ENCODE measurements at regions of chr15 and their contacts with region 1.

Region 1: DNA sequence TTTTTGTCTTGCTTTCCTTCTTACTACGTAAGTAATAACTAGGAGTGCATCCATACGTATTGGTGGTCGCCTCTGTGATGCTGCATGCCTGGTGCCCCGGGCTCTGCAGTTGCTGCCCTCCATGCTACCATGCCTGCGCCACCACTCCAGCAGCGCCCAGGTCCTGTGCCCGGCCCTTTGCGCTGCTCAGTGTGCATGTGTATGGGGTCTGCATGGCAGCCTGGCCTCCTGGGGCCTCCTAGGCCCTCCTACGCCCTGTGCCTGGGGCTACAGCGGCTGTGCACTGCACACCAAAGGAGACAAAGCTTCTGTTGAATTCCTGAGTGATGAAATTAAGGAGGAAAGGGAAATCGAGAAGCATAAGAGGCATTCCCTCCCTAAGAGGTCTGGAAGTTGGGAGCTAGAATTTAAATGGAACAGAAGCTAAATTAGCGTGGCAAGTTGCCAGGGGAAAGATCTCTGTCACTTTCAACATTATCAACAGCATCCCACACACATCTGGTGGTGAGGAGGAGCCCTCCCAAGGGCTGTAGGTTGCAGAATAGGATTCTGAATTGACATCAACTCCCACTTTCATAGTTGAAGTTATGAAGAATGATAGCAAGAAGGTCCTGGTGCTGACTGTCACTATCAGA is 275.0 kb upstream of the CHRM5 start:
- DNase-seq: peak in 39 of 42 donors; percentile 7 to 87 (median 62)

Region 2: GRCh38 chr15:33292717-33293307 is 400.5 kb before region 1 on chr15:
- intact Hi-C with region 1: loop called (anchors 5 kb)
- DNase-seq: peak in 40 of 42 donors; percentile 40 to 91 (median 72)